A673 (cell line): ENCODE measurements at regions of chr9 and their contacts with region 1.

Region 1: GRCh38 chr9:131125128-131126058 is at the start of gene NUP214:
- DNase-seq: peak; percentile 99
- H3K4me3 ChIP-seq: peak within 1 kb of the TSS; percentile 81
- H3K27ac ChIP-seq: peak within 1 kb of the TSS; percentile 91
- H3K4me1 ChIP-seq: peaks cover 5% of the 10 kb centered on the region
- H3K27me3 ChIP-seq: no peaks in the 10 kb centered on the region
- CTCF ChIP-seq: no peak
- total RNA-seq, gene NUP214: 59.7 and 64.2 TPM in 2 replicates

Region 2: GRCh38 chr9:132059361-132059760 is 934.0 kb after region 1 on chr9:
- CTCF ChIA-PET with region 1: no interaction called
- POLR2A ChIA-PET with region 1: no interaction called
- intact Hi-C with region 1: no loop called
- DNase-seq: no peak
- H3K4me3 ChIP-seq: no peak overlapping the region
- H3K27ac ChIP-seq: no peak overlapping the region
- H3K4me1 ChIP-seq: no peaks in the 10 kb centered on the region
- H3K27me3 ChIP-seq: no peaks in the 10 kb centered on the region
- CTCF ChIP-seq: no peak

Region 3: DNA sequence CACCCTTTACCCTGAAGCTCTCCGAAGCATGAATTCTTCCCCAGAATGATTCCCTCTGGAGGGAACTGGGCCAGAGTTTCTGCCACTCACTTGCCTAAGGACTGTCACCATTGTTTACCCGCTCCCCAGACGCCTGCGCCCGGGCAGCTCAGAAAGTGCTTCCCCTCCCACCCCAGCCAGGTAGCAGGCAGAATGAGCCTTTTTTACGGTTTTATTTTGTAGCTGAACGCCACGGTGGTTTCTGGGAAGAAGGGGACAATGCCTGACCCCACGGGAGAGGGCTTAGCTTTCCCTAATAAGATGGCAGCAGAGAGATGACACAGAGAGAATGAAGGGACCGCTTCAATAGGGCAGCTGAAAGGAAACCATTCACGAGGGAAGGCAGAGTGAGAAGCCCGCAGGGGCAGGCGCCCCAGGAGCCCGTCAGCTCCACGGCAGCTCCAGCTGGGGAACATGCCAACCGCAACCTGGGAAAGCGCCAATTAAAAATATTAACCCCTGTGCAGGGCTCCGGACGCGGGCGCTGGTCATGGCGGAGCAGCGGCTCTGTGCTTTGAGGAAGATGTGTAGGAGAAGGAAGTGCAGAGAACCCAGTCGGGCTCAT is 1016.1 kb after region 1 on chr9:
- CTCF ChIA-PET with region 1: no interaction called
- POLR2A ChIA-PET with region 1: interaction called, 11 read pairs
- intact Hi-C with region 1: no loop called
- DNase-seq: no peak
- H3K4me3 ChIP-seq: peak overlapping the region; percentile 14
- H3K27ac ChIP-seq: no peak overlapping the region
- H3K4me1 ChIP-seq: peaks cover 3% of the 10 kb centered on the region
- H3K27me3 ChIP-seq: peaks cover 55% of the 10 kb centered on the region
- CTCF ChIP-seq: no peak